Dorsolateral prefrontal cortex (tissue), 120 donors: ENCODE measurements at regions of chr1 and their contacts with region 1.

Region 1: DNA sequence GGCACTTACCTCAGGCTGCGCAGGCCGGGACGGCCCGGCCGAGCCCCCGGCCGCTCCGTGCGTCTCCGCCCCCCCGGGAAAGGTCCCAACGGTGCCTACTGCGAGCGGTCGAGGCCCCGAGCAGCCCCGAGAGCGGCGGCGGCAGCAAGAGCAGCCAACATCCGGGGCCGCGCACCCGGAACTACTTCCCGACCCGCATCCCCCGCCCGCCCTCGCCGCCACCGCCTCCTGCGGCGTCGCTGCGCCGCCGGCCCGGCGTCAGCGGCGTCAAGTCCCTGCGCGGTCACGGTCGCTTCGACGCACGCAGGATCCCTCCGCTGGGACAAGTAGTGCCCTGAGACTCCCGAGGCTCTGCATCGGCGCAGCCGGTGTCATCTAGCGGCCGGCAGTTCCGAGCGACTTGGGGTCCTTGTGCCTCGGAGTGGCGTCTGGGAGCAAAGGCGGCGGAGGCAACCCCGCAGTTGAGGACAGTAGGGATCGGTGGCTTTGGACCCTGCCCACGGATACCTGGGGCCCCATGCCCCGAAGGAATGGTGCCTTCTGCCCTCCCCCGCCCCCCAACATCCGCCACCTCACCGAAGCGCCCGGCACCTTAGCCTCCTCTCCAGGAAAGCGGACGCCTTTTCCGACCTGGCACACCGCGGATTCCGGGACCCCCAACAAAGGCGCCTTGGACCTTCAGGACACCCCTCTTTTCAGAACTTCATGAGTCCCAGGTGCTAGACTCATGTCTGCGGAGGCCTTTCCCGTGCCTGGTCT is at the start of gene FOXJ3:
- DNase-seq: peak; percentile 84 to 95 (median 90)
- H3K4me3 ChIP-seq: peak within 1 kb of the TSS; percentile 72 to 100 (median 96)
- H3K27ac ChIP-seq: peak within 1 kb of the TSS; percentile 73 to 99 (median 90)
- H3K27me3 ChIP-seq: no peaks in the 10 kb centered on the region
- CTCF ChIP-seq: peak in 39 of 56 donors; percentile 6 to 61 (median 32)
- total RNA-seq, gene FOXJ3: 58.3 to 97.9 (median 76.4) TPM

Region 2: GRCh38 chr1:42035830-42036604 is 299.2 kb before region 1 on chr1:
- intact Hi-C with region 1: loop called in 1 of 2 experiments (anchors 10 kb)
- DNase-seq: peak; percentile 92 to 97 (median 96)
- H3K4me3 ChIP-seq: peak overlapping the region; percentile 53 to 98 (median 90)
- H3K27ac ChIP-seq: peak overlapping the region in 45 of 59 donors; percentile 3 to 85 (median 66)
- H3K27me3 ChIP-seq: no peaks in the 10 kb centered on the region
- CTCF ChIP-seq: peak in 3 of 56 donors; percentile 2 to 11 (median 10)

Region 3: GRCh38 chr1:42259739-42260064 is 75.5 kb before region 1 on chr1:
- intact Hi-C with region 1: loop called in 1 of 2 experiments (anchors 2 kb)
- DNase-seq: no peak
- H3K4me3 ChIP-seq: peak overlapping the region in 24 of 59 donors; percentile 3 to 44 (median 22)
- H3K27ac ChIP-seq: peak overlapping the region; percentile 40 to 97 (median 89)
- H3K27me3 ChIP-seq: no peaks in the 10 kb centered on the region
- CTCF ChIP-seq: no peak

Region 4: GRCh38 chr1:42657971-42658879 is 323.0 kb after region 1 on chr1 and contains the start of gene PPIH:
- intact Hi-C with region 1: loop called (anchors 5 to 10 kb)
- DNase-seq: peak; percentile 93 to 97 (median 96)
- H3K4me3 ChIP-seq: peak within 1 kb of the TSS; percentile 65 to 97 (median 87)
- H3K27ac ChIP-seq: peak within 1 kb of the TSS in 55 of 59 donors; percentile 15 to 93 (median 75)
- H3K27me3 ChIP-seq: no peaks in the 10 kb centered on the region
- CTCF ChIP-seq: peak in 54 of 56 donors; percentile 17 to 62 (median 44)
- total RNA-seq, gene PPIH: 10.4 to 36.8 (median 23.8) TPM

Region 5: GRCh38 chr1:42766741-42767509 is 431.7 kb after region 1 on chr1 and contains the starts of genes C1orf50 and P3H1:
- intact Hi-C with region 1: loop called in 1 of 2 experiments (anchors 5 kb)
- DNase-seq: peak; percentile 99 to 100 (median 100)
- H3K4me3 ChIP-seq: peak within 1 kb of the TSS; percentile 75 to 100 (median 96)
- H3K27ac ChIP-seq: peak within 1 kb of the TSS; percentile 38 to 97 (median 88)
- H3K27me3 ChIP-seq: no peaks in the 10 kb centered on the region
- CTCF ChIP-seq: peak in 25 of 56 donors; percentile 5 to 62 (median 26)
- total RNA-seq, gene C1orf50: 5.1 to 19.5 (median 10.6) TPM
- total RNA-seq, gene P3H1: 13.8 to 34.7 (median 21.9) TPM